AG04449 (cell line): ENCODE measurements at regions of chr16 and their contacts with region 1.

Region 1: GRCh38 chr16:25135254-25135878 is 23.8 kb downstream of the LCMT1 start:
- DNase-seq: peak; percentile 24
- H3K4me3 ChIP-seq: no peak overlapping the region
- CTCF ChIP-seq: peak; percentile 41

Region 2: GRCh38 chr16:24906199-24907020 is 229.0 kb before region 1 on chr16:
- CTCF ChIA-PET with region 1: interaction called, 12 read pairs
- POLR2A ChIA-PET with region 1: no interaction called
- DNase-seq: no peak
- H3K4me3 ChIP-seq: no peak overlapping the region
- CTCF ChIP-seq: peak; percentile 33

Region 3: DNA sequence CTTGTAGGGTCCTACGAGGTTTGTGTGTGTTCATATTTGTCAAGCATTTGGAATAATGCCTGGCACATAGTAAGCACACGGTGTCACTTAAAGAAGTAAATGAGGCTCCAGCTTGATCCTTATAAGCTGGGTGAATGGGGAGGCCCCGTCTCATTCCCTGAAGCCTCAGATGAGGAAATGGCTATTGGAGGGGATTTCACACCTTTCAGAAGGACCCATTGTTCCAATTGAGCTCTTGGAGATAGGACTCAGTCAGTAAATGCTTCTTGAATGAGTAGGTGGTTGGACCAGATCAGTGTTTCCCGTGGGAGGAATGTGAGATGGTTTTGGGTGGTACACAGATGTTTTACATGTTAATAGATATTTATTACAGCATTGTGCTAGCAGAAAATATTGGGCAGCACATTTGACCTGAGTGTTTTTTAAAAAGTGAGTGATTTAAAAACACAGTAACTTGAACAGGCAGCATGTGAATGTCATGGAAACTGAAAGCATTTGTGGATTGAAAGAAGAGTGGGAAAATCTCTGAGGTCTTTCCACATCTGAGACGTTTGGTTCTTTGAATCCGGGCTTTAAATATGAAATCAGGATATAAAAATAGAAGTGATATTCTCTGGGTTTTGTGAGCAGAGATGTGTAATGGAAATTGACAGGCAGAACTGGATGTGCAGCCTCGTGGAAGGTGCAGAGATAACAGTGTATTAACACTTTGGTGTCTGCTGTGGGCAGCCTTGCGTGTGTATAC is 83.8 kb before region 1 on chr16:
- CTCF ChIA-PET with region 1: interaction called, 53 read pairs
- POLR2A ChIA-PET with region 1: no interaction called
- DNase-seq: no peak
- H3K4me3 ChIP-seq: no peak overlapping the region
- CTCF ChIP-seq: no peak

Region 4: GRCh38 chr16:25163683-25164082 is 28.3 kb after region 1 on chr16:
- CTCF ChIA-PET with region 1: no interaction called
- POLR2A ChIA-PET with region 1: no interaction called
- DNase-seq: no peak
- H3K4me3 ChIP-seq: no peak overlapping the region
- CTCF ChIP-seq: no peak